HEK293 (cell line): ENCODE measurements at regions of chr6 and their contacts with region 1.

Region 1: DNA sequence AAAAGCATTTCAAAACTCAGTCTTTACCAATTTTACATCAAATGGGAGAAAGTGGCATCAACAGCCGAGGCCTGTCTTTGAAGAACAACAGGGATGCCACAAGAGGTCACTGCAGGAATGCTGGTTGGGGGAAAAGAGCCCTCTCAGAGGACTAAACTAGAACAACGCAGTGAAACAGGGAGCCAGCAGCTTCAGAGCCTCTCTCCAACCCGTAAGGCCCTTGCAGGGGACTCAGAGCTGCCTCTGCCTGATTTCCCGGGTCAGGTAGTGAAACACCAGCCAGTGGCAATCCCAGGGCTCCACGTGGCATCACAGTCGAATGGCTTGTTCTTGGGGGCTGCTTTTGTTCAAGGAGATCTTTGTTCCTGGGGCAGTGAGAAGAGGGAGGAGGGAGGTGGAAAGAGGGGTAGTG is 55.0 kb upstream of the KCNK16 start:
- H3K4me3 ChIP-seq: no peak overlapping the region
- H3K27ac ChIP-seq: no peak overlapping the region
- H3K4me1 ChIP-seq: no peaks in the 10 kb centered on the region
- CTCF ChIP-seq: peak; percentile 87

Region 2: GRCh38 chr6:39361657-39362486 is 15.7 kb before region 1 on chr6:
- CTCF ChIA-PET with region 1: interaction called, 37 read pairs
- POLR2A ChIA-PET with region 1: no interaction called
- H3K4me3 ChIP-seq: no peak overlapping the region
- H3K27ac ChIP-seq: no peak overlapping the region
- H3K4me1 ChIP-seq: no peaks in the 10 kb centered on the region
- CTCF ChIP-seq: peak; percentile 80

Region 3: GRCh38 chr6:39892490-39893129 is 515.1 kb after region 1 on chr6:
- CTCF ChIA-PET with region 1: interaction called, 49 read pairs
- POLR2A ChIA-PET with region 1: no interaction called
- H3K4me3 ChIP-seq: no peak overlapping the region
- H3K27ac ChIP-seq: no peak overlapping the region
- H3K4me1 ChIP-seq: no peaks in the 10 kb centered on the region
- CTCF ChIP-seq: peak; percentile 66